Activated naive CD4-positive, alpha-beta T cell treated with anti-CD3 and anti-CD28 coated beads, Interleukin-2, amount 10 ng/mL, durations not matched to agents 7 days and 5 days (primary cell): ENCODE measurements at regions of chr2 and their contacts with region 1.

Region 1: DNA sequence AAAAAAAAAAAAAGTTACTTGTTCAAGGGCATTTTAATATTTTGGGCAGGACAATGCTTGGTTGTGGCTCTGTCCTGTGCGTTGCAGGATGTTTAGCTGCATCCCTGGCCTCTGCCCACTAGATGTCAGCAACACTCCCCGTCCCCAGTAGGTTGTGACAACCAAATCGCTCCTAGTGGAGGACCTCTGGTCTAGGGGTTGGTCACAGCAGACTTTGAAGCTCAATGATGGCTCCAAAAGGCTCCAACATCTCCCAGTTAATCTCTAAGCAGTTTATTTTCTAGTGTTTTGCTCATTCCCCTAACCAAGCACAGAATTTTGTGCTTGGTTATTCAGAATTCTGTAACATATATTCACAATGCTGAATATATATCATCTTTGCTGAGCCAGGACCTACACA is 67.0 kb downstream of the CHRNA1 start:
- DNase-seq: peak; percentile 78
- H3K4me3 Mint-ChIP-seq: no peak overlapping the region
- H3K27ac Mint-ChIP-seq: no peak overlapping the region
- H3K4me1 Mint-ChIP-seq: peaks cover 2% of the 10 kb centered on the region
- H3K27me3 Mint-ChIP-seq: peaks cover 54% of the 10 kb centered on the region

Region 2: GRCh38 chr2:174495350-174496012 is 201.8 kb before region 1 on chr2:
- CTCF ChIA-PET with region 1: no interaction called
- DNase-seq: no peak
- H3K4me3 Mint-ChIP-seq: no peak overlapping the region
- H3K27ac Mint-ChIP-seq: peak overlapping the region; percentile 100
- H3K4me1 Mint-ChIP-seq: peaks cover 61% of the 10 kb centered on the region
- H3K27me3 Mint-ChIP-seq: no peaks in the 10 kb centered on the region

Region 3: DNA sequence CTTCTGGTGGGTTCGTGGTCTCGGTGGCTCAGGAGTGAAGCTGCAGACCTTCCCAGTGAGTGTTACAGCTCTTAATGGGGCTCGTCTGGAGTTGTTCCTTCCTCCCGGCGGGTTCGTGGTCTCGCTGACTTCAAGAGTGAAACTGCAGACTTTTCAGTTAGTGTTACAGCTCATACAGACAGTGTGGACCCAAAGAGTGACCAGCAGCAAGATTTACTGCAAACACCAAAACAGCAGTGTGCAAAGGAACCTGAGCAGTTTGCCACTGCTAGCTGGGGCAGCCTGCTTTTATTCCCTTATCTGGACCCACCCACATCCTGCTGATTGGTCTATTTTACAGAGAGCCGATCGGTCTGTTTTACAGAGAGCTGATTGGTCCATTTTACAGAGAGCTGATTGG is 11.5 kb after region 1 on chr2:
- CTCF ChIA-PET with region 1: interaction called, 11 read pairs
- DNase-seq: no peak
- H3K4me3 Mint-ChIP-seq: no peak overlapping the region
- H3K27ac Mint-ChIP-seq: no peak overlapping the region
- H3K4me1 Mint-ChIP-seq: no peaks in the 10 kb centered on the region
- H3K27me3 Mint-ChIP-seq: peaks cover 34% of the 10 kb centered on the region

Region 4: DNA sequence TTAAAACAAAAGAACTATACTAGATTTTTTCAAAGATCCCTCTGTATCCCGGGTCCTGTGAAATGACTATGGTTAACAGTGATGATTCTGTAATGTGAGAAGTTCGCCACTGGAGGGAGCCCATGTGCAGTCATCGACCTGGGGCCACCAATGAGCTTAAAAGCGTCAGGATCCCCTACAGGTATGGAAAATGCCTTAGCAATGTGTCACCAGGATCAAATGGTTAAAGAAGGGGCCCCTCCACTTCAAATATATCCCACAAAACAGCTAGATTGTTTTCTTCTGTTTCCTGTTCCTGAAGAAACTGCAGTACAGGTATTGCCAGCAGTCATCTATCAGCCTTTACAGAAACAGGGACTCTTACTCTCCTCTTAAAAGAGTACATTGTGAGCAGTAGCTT is 51.7 kb after region 1 on chr2:
- CTCF ChIA-PET with region 1: interaction called, 72 read pairs
- DNase-seq: peak; percentile 83
- H3K4me3 Mint-ChIP-seq: no peak overlapping the region
- H3K27ac Mint-ChIP-seq: no peak overlapping the region
- H3K4me1 Mint-ChIP-seq: peaks cover 39% of the 10 kb centered on the region
- H3K27me3 Mint-ChIP-seq: peaks cover 41% of the 10 kb centered on the region

Region 5: GRCh38 chr2:174771631-174772471 is 74.6 kb after region 1 on chr2:
- CTCF ChIA-PET with region 1: interaction called, 41 read pairs
- DNase-seq: peak; percentile 65
- H3K4me3 Mint-ChIP-seq: no peak overlapping the region
- H3K27ac Mint-ChIP-seq: no peak overlapping the region
- H3K4me1 Mint-ChIP-seq: peaks cover 25% of the 10 kb centered on the region
- H3K27me3 Mint-ChIP-seq: peaks cover 41% of the 10 kb centered on the region